ENCODE measurements at regions of chr11 and their contacts with region 1.

Region 1: GRCh38 chr11:27296497-27296896 is 66.5 kb downstream of the CCDC34 start:
- DNase-seq: no peak
- H3K4me3 Mint-ChIP-seq: no peak overlapping the region
- H3K27ac Mint-ChIP-seq: no peak overlapping the region
- H3K4me1 Mint-ChIP-seq: peaks cover 6% of the 10 kb centered on the region
- H3K27me3 Mint-ChIP-seq: peaks cover 5% of the 10 kb centered on the region

Region 2: DNA sequence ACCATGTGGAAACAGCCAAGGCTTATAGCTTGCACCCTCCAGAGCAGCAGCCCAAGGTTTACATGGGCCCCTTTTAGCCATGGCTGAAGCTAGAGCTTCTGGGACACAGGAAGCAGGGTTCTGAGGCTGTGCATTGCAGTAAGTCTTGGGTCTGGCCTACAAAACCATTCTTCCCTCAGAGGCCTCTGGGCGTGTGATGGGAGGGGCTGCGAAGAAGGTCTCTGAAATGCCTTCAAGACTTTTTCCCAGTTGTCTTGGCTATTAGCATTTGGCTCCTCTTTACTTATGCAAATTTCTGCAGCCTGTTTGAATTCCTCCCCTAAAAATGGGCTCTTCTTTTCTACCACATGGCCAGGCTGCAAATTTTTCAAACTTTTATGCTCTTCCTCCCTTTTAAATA is 146.4 kb before region 1 on chr11:
- CTCF ChIA-PET with region 1: no interaction called
- POLR2A ChIA-PET with region 1: no interaction called
- intact Hi-C with region 1: no loop called
- DNase-seq: no peak
- H3K4me3 Mint-ChIP-seq: no peak overlapping the region
- H3K27ac Mint-ChIP-seq: no peak overlapping the region
- H3K4me1 Mint-ChIP-seq: no peaks in the 10 kb centered on the region
- H3K27me3 Mint-ChIP-seq: no peaks in the 10 kb centered on the region

Region 3: GRCh38 chr11:27183672-27184457 is 112.6 kb before region 1 on chr11:
- CTCF ChIA-PET with region 1: interaction called, 6 read pairs
- POLR2A ChIA-PET with region 1: no interaction called
- intact Hi-C with region 1: loop called (anchors 1 kb)
- DNase-seq: peak; percentile 36
- H3K4me3 Mint-ChIP-seq: no peak overlapping the region
- H3K27ac Mint-ChIP-seq: no peak overlapping the region
- H3K4me1 Mint-ChIP-seq: no peaks in the 10 kb centered on the region
- H3K27me3 Mint-ChIP-seq: peaks cover 4% of the 10 kb centered on the region

Region 4: GRCh38 chr11:27281740-27282590 is 14.5 kb before region 1 on chr11:
- CTCF ChIA-PET with region 1: interaction called, 11 read pairs
- POLR2A ChIA-PET with region 1: no interaction called
- intact Hi-C with region 1: loop called (anchors 1 kb)
- DNase-seq: no peak
- H3K4me3 Mint-ChIP-seq: no peak overlapping the region
- H3K27ac Mint-ChIP-seq: no peak overlapping the region
- H3K4me1 Mint-ChIP-seq: no peaks in the 10 kb centered on the region
- H3K27me3 Mint-ChIP-seq: peaks cover 2% of the 10 kb centered on the region

Region 5: DNA sequence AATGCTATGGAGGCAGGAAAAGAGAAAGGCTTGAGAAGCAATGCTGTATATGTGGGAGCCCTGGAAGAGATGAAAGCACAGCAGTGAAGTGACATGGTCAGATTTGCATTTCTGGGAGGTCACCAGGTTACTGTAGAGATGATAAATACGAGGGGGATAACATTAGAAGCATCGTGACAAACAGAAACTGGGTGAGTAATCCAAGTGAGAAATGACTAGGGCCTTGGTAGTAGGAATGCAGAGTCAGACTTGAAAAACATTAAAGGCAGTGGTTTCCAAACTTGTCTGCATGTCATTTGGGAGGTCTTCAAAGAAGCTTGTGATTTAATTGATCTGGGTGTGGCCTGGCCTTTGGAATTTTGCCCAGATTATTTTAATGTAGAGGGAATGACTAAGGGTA is 22.6 kb after region 1 on chr11:
- CTCF ChIA-PET with region 1: no interaction called
- POLR2A ChIA-PET with region 1: no interaction called
- intact Hi-C with region 1: loop called (anchors 1 kb)
- DNase-seq: peak; percentile 22
- H3K4me3 Mint-ChIP-seq: no peak overlapping the region
- H3K27ac Mint-ChIP-seq: no peak overlapping the region
- H3K4me1 Mint-ChIP-seq: peaks cover 15% of the 10 kb centered on the region
- H3K27me3 Mint-ChIP-seq: peaks cover 10% of the 10 kb centered on the region